Activated CD4-positive, alpha-beta memory T cell treated with anti-CD3 and anti-CD28 coated beads for 36 hours (primary cell): ENCODE measurements at regions of chr4 and their contacts with region 1.

Region 1: GRCh38 chr4:1746265-1746691 is 25.0 kb downstream of the TACC3 start:
- DNase-seq: peak; percentile 86
- H3K4me3 Mint-ChIP-seq: no peak overlapping the region
- H3K27ac Mint-ChIP-seq: no peak overlapping the region
- H3K4me1 Mint-ChIP-seq: no peaks in the 10 kb centered on the region
- H3K27me3 Mint-ChIP-seq: no peaks in the 10 kb centered on the region

Region 2: GRCh38 chr4:1583051-1583785 is 163.1 kb before region 1 on chr4:
- CTCF ChIA-PET with region 1: no interaction called
- POLR2A ChIA-PET with region 1: no interaction called
- intact Hi-C with region 1: no loop called
- DNase-seq: no peak
- H3K4me3 Mint-ChIP-seq: no peak overlapping the region
- H3K27ac Mint-ChIP-seq: no peak overlapping the region
- H3K4me1 Mint-ChIP-seq: peaks cover 4% of the 10 kb centered on the region
- H3K27me3 Mint-ChIP-seq: no peaks in the 10 kb centered on the region

Region 3: DNA sequence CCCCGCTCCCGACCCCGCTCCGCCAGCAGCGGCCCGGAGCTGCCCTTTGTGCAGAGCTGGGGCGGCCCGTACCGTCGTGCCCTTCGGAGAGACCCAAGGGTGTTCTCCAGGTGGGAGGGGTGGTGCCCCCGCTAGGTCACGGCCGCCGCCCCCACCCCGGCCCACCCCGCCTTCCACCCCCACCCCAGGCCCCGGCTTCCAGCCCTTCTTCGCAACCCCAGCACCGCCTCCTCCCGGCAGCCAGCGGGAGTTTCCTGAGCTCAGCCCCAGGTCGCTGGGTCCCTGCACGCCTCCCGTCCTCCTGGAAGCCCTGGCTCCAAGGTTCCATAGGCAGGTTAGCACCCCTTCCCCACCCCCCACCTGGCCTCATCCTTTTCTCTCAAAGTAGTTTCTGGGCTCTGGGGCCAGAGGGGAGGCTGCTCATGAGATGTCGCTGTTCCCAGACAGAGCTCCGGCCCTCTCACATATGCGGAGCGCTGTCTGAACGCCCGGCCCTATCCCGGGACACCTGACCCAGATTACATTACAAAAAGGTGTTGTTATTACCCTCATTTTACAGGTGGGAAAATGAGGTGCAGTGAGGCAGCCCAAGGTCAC is 21.6 kb after region 1 on chr4:
- CTCF ChIA-PET with region 1: interaction called, 21 read pairs
- POLR2A ChIA-PET with region 1: no interaction called
- intact Hi-C with region 1: no loop called
- DNase-seq: peak; percentile 54
- H3K4me3 Mint-ChIP-seq: no peak overlapping the region
- H3K27ac Mint-ChIP-seq: no peak overlapping the region
- H3K4me1 Mint-ChIP-seq: peaks cover 2% of the 10 kb centered on the region
- H3K27me3 Mint-ChIP-seq: peaks cover 16% of the 10 kb centered on the region

Region 4: DNA sequence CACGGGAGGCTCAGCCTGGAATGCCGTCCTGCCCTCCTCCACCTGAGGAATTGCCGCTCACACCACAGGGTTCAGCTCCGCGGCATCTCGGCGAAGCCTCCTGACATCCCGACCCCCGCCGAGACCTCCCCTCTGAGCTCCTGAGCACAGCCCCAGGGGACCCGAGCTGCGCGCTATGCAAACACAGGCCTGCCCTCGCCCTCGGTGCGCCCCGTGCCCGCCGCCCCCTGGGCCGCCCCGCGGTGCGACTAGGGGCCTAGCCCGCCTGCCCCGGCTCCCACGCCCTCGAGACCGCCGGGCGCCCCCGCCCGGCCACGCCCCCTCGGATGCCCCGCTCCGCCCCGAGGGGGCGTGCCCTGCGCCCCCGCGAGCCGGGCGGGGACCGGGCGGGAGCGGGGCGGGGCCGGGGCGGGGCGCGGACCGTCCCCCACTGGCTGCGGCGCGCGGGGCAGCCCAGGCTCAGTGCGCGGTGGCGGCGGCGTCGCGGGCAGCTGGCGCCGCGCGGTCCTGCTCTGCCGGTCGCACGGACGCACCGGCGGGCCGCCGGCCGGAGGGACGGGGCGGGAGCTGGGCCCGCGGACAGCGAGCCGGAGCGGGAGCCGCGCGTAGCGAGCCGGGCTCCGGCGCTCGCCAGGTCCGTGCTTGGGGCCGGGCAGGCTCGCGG is 46.7 kb after region 1 on chr4 and contains the start of gene FGFR3:
- CTCF ChIA-PET with region 1: interaction called, 9 read pairs
- POLR2A ChIA-PET with region 1: no interaction called
- intact Hi-C with region 1: loop called (anchors 5 kb)
- DNase-seq: peak; percentile 35
- H3K4me3 Mint-ChIP-seq: no peak within 1 kb of the TSS
- H3K27ac Mint-ChIP-seq: no peak within 1 kb of the TSS
- H3K4me1 Mint-ChIP-seq: no peaks in the 10 kb centered on the region
- H3K27me3 Mint-ChIP-seq: peaks cover 13% of the 10 kb centered on the region
- total RNA-seq, gene FGFR3: 0.21 to 0.27 TPM

Region 5: DNA sequence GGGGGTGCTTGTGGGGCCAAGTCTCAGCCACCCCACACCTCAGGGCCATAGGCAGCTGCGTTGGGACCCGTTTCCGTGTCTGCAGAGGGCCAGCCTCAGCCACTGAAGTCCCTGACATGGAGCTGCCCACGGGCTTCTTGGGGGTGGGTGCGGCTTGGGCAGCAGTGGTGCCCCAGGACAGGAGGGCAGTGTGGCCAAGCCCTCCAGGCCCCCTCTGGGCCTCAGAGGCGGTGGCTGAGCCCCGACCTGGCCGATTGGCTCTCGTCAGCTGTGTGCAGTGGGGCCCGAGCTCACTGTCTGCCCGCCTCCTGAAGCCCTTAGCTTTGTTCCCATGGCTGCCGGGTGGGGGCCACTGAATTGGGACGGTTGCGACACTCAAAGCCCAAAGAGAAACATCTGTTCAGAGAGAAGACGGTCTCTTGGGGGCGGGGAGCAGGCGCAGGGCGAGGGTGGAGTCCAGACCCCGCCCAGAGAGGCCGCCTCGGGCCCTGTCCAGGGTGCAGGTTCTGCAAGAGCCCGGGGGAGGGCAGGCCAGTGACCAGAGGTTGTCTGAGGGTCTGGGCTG is 56.0 kb after region 1 on chr4:
- CTCF ChIA-PET with region 1: interaction called, 27 read pairs
- POLR2A ChIA-PET with region 1: no interaction called
- intact Hi-C with region 1: no loop called
- DNase-seq: no peak
- H3K4me3 Mint-ChIP-seq: no peak overlapping the region
- H3K27ac Mint-ChIP-seq: no peak overlapping the region
- H3K4me1 Mint-ChIP-seq: no peaks in the 10 kb centered on the region
- H3K27me3 Mint-ChIP-seq: peaks cover 2% of the 10 kb centered on the region

Region 6: DNA sequence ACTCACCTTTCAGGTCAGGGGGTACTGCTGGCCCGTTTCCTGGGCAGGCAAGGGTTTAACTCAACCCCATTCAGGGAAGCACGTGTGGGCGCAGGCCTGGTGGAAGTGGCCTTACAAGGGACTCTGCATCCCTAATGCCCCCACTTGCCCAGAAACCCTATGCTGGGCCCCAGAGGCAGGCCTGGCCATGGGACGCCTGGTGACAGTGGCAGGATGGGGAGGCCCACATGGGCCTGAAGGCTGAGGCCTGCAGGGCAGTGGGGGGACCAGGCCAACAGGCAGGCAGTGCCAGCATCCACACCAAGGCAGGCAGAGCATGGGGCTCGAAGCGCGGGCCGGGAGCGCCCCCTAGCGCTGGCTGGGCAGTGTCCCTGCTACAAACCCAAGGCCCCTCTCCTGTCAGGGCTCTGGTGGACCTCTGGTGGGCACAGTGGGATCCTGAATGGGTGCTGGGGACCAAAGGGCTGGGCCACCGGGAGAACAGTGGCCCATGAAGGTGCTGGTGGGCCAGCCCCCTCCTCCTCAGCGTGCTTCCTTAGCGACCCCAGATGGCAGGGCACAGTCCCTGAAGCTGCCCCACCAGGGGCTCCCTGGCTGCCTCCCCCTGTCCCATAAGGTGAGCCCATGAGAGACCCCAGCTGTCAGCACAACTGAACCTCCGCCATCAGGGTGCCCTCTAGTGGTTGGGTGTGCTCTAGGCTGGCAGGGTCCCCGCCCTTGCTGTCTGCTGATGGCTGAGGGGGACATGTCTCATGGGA is 63.7 kb after region 1 on chr4:
- CTCF ChIA-PET with region 1: interaction called, 63 read pairs
- POLR2A ChIA-PET with region 1: no interaction called
- intact Hi-C with region 1: loop called (anchors 1 kb)
- DNase-seq: peak; percentile 84
- H3K4me3 Mint-ChIP-seq: no peak overlapping the region
- H3K27ac Mint-ChIP-seq: no peak overlapping the region
- H3K4me1 Mint-ChIP-seq: no peaks in the 10 kb centered on the region
- H3K27me3 Mint-ChIP-seq: no peaks in the 10 kb centered on the region